Sciatic nerve (tissue), 2 donors: ENCODE measurements at regions of chr16 and their contacts with region 1.

Region 1: DNA sequence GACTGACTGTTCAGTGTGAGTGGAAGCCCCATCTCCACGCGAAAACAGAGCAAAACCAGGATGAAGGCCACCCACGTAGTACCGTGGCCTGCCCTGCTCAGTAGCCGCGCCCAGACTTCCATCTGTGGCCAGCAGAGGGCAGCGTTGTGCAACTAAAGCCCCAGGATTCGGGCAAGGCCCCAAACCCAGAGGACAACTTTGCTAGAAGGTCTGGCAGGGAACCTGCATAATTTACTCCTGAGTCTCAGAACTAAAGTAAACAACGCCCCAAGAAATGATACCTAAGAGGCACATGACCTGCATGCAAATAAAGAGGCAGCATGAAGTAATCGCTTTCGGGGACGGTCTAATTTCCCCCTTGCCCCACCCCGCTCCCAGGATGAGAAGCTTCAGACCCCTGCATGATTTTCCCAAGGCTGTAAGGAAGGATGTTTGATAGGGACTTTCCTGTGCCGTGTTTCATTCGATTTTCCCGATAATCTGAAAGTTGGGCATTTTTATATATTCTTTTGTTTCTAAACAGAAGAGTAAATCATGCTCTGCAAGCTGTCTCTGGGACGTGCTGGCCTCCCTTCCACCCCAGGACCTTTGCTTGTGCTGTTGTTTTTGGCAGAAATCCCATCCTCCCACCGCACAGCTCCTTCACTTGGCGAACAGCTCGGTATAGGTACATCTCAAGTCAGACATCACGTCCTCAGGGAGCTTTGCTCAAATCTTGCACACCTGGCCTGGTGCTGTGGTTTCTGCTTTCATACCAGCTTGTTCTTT is 18.6 kb downstream of the HSBP1 start:
- DNase-seq: peak; percentile 93
- ATAC-seq: peak; percentile 84

Region 2: GRCh38 chr16:82603784-82604411 is 1222.4 kb before region 1 on chr16:
- intact Hi-C with region 1: loop called (anchors 5 kb)
- DNase-seq: no peak
- ATAC-seq: peak; percentile 45

Region 3: DNA sequence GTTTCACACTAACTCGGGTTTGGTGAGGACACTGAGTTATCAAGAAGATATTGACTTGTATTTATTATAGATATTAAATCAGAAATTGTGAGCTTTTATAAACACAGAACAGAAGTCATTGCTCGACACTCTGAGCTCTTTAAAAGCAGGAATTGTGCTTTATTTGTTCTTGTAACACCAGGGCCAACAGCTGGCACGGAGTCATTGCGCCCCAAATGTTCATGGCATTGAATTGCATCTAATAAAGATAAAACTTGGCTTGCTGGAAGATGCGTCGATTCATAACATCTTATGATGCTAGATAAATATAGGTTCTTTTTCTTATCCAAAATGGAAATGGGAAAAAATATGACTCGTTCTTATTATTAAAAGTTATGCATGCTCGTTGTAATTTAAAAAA is 60.8 kb after region 1 on chr16:
- intact Hi-C with region 1: loop called (anchors 10 kb)
- DNase-seq: no peak
- ATAC-seq: no peak